ENCODE measurements at regions of chr7 and their contacts with region 1.

Region 1: DNA sequence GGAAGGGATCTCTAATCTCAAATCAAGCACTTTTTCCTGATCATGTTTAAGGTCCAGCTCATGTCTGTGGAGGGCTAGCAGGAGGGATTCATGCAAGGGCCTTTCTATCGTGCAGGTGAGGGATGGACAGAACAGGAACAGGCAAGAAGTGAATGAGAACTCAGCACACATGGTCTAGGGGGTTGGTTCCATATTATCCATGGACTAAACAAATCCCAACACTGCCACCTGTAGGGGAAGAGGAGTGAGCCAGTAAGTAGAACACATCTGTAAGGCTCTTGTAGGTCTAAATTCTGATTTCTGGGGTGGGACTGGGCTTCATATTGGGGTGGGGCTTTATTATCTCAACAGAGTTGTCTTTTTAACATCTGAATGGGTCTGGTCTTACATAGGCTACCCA is 138.0 kb upstream of the TARP start:
- DNase-seq: no peak
- ATAC-seq: peak; percentile 70
- H3K4me3 ChIP-seq: no peak overlapping the region
- H3K27ac ChIP-seq: no peak overlapping the region
- H3K4me1 ChIP-seq: no peaks in the 10 kb centered on the region
- H3K27me3 ChIP-seq: no peaks in the 10 kb centered on the region
- CTCF ChIP-seq: peak; percentile 15 to 24 (median 17); a peak in 1 of 6 replicates
- EP300 ChIP-seq: no peak
- POLR2A ChIP-seq: no peak
- RAD21 ChIP-seq: no peak

Region 2: DNA sequence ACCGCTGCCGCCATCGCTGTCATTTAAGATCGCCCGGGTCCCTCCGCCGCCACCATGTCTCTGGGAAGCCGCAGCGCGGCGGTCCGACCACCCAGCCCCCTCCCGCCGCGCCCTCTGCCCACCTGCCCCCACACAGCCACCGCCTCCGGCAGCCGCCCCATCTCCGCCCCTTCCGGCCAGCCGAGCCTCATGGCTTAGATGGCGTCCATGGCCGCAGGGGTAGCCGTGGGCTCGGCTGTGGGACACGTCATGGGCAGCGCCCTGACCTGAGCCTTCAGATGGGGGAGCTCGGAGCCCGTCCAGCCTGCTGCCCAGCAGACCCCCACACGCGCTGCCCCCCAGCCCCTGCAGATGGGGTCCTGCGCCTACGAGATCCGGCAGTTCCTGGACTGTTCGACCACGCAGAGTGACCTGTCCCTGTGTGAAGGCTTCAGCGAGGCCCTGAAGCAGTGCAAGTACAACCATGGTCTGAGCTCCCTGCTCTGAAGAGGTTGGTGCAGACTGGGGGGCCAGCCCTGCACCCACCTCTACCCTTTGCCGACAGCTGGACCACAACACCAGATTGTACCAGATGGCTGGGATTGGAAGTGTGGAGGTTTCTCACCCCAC is 100.0 kb before region 1 on chr7:
- CTCF ChIA-PET with region 1: no interaction called
- POLR2A ChIA-PET with region 1: no interaction called
- RAD21 ChIA-PET with region 1: no interaction called
- SMC1A ChIA-PET with region 1: no interaction called
- in situ Hi-C with region 1: no loop called
- intact Hi-C with region 1: no loop called
- DNase-seq: no peak
- ATAC-seq: peak; percentile 95
- H3K4me3 ChIP-seq: peak overlapping the region; percentile 71
- H3K27ac ChIP-seq: peak overlapping the region; percentile 35; the same call in 1 of the 2 replicates
- H3K4me1 ChIP-seq: peaks cover 20% of the 10 kb centered on the region
- H3K27me3 ChIP-seq: no peaks in the 10 kb centered on the region
- CTCF ChIP-seq: no peak
- EP300 ChIP-seq: no peak
- POLR2A ChIP-seq: peak; percentile 89
- RAD21 ChIP-seq: no peak

Region 3: GRCh38 chr7:38451840-38452239 is 40.4 kb after region 1 on chr7:
- CTCF ChIA-PET with region 1: no interaction called
- POLR2A ChIA-PET with region 1: no interaction called
- RAD21 ChIA-PET with region 1: no interaction called
- SMC1A ChIA-PET with region 1: no interaction called
- in situ Hi-C with region 1: no loop called
- intact Hi-C with region 1: no loop called
- DNase-seq: no peak
- ATAC-seq: no peak
- H3K4me3 ChIP-seq: no peak overlapping the region
- H3K27ac ChIP-seq: no peak overlapping the region
- H3K4me1 ChIP-seq: no peaks in the 10 kb centered on the region
- H3K27me3 ChIP-seq: no peaks in the 10 kb centered on the region
- CTCF ChIP-seq: 0 out of 6 replicates have a peak, but pooled peaks of 1 of the 3 experiments have one; percentile 11
- EP300 ChIP-seq: no peak
- POLR2A ChIP-seq: no peak
- RAD21 ChIP-seq: 0 out of 2 replicates have a peak, but pooled peaks have one; percentile 24

Region 4: DNA sequence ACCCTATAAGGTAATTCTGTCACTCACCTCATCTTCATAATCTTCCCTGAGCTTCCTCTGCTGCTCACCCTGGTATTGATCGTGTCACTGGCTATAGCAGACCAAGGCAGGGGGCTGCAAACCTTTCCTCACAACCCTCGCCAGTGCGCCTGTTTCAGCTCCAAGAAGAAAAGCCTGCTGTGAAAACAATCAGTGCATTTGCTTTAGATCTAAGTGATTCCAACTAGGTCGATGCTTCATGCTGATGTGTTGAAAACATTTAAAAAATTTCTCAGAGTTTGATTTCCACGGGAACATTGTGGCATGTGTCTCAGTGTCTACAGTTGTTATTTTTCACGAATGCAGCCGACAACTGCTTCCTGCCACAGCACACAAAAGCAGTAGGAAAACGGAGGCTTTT is 593.6 kb after region 1 on chr7:
- CTCF ChIA-PET with region 1: no interaction called
- POLR2A ChIA-PET with region 1: no interaction called
- RAD21 ChIA-PET with region 1: no interaction called
- SMC1A ChIA-PET with region 1: no interaction called
- in situ Hi-C with region 1: no loop called
- intact Hi-C with region 1: no loop called
- DNase-seq: no peak
- ATAC-seq: no peak
- H3K4me3 ChIP-seq: no peak overlapping the region
- H3K27ac ChIP-seq: no peak overlapping the region
- H3K4me1 ChIP-seq: no peaks in the 10 kb centered on the region
- H3K27me3 ChIP-seq: no peaks in the 10 kb centered on the region
- CTCF ChIP-seq: no peak
- EP300 ChIP-seq: no peak
- POLR2A ChIP-seq: no peak
- RAD21 ChIP-seq: no peak

Region 5: DNA sequence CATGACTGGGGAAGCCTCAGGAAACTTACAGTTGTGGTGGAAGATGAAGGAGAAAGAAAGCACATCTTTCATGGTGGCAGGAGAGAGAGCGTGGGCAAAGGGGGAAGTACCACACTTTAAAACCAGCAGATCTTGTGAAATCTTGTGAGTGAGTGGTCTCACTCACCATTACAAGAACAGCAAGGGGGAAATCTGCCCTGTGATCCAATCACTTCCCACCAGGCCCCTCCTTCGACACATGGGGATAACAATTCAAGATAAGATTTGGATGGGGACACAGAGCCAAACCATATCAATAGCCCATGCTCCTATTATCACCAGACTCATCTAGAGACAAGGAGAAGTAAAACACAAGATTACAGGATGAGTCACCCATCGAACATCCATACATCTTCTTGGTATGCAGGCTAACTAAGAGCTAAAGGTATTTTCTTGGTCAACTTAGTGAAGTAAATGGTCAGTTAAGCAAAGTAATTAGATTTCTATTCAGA is 1099.5 kb after region 1 on chr7:
- CTCF ChIA-PET with region 1: no interaction called
- POLR2A ChIA-PET with region 1: no interaction called
- RAD21 ChIA-PET with region 1: no interaction called
- SMC1A ChIA-PET with region 1: no interaction called
- in situ Hi-C with region 1: loop called (anchors 10 kb)
- intact Hi-C with region 1: no loop called
- DNase-seq: no peak
- ATAC-seq: peak; percentile 28; the same call in 2 of the 3 replicates
- H3K4me3 ChIP-seq: no peak overlapping the region
- H3K27ac ChIP-seq: no peak overlapping the region
- H3K4me1 ChIP-seq: no peaks in the 10 kb centered on the region
- H3K27me3 ChIP-seq: no peaks in the 10 kb centered on the region
- CTCF ChIP-seq: no peak
- EP300 ChIP-seq: no peak
- POLR2A ChIP-seq: no peak
- RAD21 ChIP-seq: no peak

Measured in GM12878 (cell line).